ENCODE measurements at regions of chr17 and their contacts with region 1.

Region 1: GRCh38 chr17:76432712-76433336 is 20.1 kb downstream of the UBE2O start:
- DNase-seq: peak; percentile 82

Region 2: GRCh38 chr17:76337413-76337777 is 95.4 kb before region 1 on chr17:
- in situ Hi-C with region 1: loop called (anchors 25 kb)
- DNase-seq: no peak

Region 3: GRCh38 chr17:76737082-76737675 is 304.4 kb after region 1 on chr17 and contains the start of gene SRSF2:
- in situ Hi-C with region 1: loop called (anchors 25 kb)
- DNase-seq: peak; percentile 99
- total RNA-seq, gene SRSF2: 173 and 184 TPM in 2 replicates